HepG2 (cell line): ENCODE measurements at regions of chr7 and their contacts with region 1.

Region 1: GRCh38 chr7:98400542-98401340 is at the start of gene BAIAP2L1:
- DNase-seq: peak; percentile 80
- ATAC-seq: peak; percentile 86
- H3K4me3 ChIP-seq: peak within 1 kb of the TSS; percentile 70 to 85 (median 77)
- H3K27ac ChIP-seq: peak within 1 kb of the TSS; percentile 77
- H3K4me1 ChIP-seq: peaks cover 57% of the 10 kb centered on the region
- H3K27me3 ChIP-seq: no peaks in the 10 kb centered on the region
- CTCF ChIP-seq: no peak
- EP300 ChIP-seq: no peak
- POLR2A ChIP-seq: no peak; a peak in 1 of 4 replicates
- RAD21 ChIP-seq: peak; percentile 80; the same call in 1 of the 2 replicates
- total RNA-seq, gene BAIAP2L1: 13.0 and 13.7 TPM in 2 replicates

Region 2: DNA sequence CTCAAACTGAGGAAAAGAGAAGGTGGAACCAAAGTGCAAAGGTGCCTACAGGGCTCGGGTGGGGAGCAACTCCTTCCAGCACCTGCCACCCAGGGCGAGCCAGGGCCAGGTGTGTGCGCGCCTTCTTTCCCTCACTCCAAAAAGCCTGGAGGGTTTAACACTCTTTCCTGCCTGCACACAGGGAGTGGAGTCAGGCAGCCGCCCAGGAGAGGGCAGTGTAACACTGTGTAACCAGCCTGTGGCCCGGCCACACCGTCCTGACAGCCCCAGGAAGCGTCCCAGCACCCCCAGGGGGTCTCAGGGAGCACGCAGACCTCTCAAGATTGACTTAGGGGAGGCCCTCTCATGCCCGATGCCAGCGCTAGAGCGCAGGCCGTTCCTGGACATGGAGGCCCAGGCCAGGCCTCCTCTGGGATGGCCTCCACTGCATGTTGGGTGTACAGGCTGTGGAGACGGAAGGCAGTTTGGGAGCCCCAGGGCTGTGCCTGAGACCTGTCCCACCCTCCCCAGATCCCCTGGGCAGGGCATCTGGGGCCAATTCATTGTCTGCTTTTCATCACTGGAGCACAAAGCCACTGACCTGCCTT is 105.9 kb before region 1 on chr7:
- CTCF ChIA-PET with region 1: interaction called, 9 read pairs
- POLR2A ChIA-PET with region 1: no interaction called
- in situ Hi-C with region 1: loop called (anchors 5 kb)
- intact Hi-C with region 1: loop called (anchors 2 kb)
- DNase-seq: peak; percentile 35
- ATAC-seq: peak; percentile 89
- H3K4me3 ChIP-seq: no peak overlapping the region
- H3K27ac ChIP-seq: no peak overlapping the region
- H3K4me1 ChIP-seq: 0 out of 2 replicates have a peak, but pooled peaks cover under 1% of the 10 kb centered on the region
- H3K27me3 ChIP-seq: no peaks in the 10 kb centered on the region
- CTCF ChIP-seq: peak; percentile 88
- EP300 ChIP-seq: no peak
- POLR2A ChIP-seq: no peak
- RAD21 ChIP-seq: peak; percentile 87

Region 3: DNA sequence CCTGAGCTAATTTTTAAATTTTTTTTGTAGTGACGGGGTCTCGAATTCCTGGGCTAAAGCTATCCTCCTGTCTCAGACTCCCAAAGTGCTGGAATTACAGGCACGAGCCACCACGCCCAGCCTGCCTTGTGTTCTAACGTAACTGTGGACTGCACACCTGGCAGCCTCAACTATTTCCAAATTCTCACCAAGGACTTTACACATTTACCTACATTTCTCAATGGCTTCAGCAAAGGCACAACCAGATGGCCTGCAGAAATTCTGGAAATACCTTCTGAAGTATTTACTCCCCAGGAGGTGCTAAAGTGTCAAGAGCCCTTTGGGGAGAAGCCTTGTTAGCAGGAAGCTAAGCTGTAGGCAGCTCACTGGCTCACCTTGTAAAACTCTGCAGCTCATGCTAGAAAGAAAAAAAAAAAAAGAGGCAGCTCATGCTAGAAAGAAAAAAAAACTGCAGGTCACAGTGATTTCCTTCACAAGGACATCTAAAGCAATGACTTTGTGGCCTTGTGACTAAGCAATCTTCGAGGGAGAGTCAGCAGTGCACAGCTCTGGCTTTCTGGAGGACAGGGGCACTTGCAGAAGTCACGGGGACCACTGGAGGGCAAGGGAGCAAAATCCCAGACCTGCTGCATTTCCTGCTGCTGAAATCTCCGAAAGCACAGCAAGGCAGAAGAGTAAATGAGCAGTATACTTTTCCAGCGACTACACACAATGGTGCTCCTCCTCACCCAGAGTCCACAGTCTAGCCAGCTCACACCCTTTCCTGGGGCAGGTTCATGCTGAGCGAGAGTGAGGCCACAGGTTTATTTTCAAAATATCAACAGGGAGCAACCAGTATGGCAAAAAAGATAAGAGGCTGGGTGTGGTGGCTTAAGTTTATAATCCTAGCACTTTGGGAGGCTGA is 40.3 kb before region 1 on chr7:
- CTCF ChIA-PET with region 1: interaction called, 3 read pairs
- POLR2A ChIA-PET with region 1: interaction called, 4 read pairs
- in situ Hi-C with region 1: no loop called
- intact Hi-C with region 1: loop called (anchors 5 kb)
- DNase-seq: peak; percentile 51
- ATAC-seq: peak; percentile 92
- H3K4me3 ChIP-seq: peak overlapping the region in 1 of 3 experiments; percentile 19; a peak in 1 of 6 replicates
- H3K27ac ChIP-seq: peak overlapping the region; percentile 58
- H3K4me1 ChIP-seq: peaks cover 29% of the 10 kb centered on the region
- H3K27me3 ChIP-seq: no peaks in the 10 kb centered on the region
- CTCF ChIP-seq: peak; percentile 29; the same call in 1 of the 2 replicates
- EP300 ChIP-seq: no peak
- POLR2A ChIP-seq: no peak
- RAD21 ChIP-seq: no peak; the same call in 1 of the 2 replicates

Region 4: DNA sequence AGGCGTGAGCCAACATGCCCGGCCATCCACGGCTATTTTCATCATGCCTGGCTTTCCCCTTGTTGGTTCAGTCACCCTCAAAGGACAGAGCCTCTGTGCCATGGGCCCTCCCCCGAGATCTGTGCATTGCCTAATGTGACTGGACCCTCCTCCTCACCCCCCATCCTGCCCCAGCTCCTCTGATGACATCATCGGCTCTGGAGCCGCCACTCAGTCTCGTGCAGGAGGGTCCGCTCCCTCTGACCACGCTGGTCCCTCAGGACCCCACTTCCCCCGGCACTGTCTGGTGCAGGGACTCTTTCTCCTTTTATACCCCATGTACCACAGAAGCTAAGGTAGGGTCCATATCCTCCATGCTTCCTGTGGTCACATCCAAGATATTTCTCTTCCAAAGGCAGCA is 33.4 kb after region 1 on chr7:
- CTCF ChIA-PET with region 1: no interaction called
- POLR2A ChIA-PET with region 1: no interaction called
- in situ Hi-C with region 1: no loop called
- intact Hi-C with region 1: no loop called
- DNase-seq: no peak
- ATAC-seq: no peak
- H3K4me3 ChIP-seq: no peak overlapping the region
- H3K27ac ChIP-seq: no peak overlapping the region
- H3K4me1 ChIP-seq: no peaks in the 10 kb centered on the region
- H3K27me3 ChIP-seq: no peaks in the 10 kb centered on the region
- CTCF ChIP-seq: no peak
- EP300 ChIP-seq: no peak
- POLR2A ChIP-seq: no peak
- RAD21 ChIP-seq: no peak

Region 5: DNA sequence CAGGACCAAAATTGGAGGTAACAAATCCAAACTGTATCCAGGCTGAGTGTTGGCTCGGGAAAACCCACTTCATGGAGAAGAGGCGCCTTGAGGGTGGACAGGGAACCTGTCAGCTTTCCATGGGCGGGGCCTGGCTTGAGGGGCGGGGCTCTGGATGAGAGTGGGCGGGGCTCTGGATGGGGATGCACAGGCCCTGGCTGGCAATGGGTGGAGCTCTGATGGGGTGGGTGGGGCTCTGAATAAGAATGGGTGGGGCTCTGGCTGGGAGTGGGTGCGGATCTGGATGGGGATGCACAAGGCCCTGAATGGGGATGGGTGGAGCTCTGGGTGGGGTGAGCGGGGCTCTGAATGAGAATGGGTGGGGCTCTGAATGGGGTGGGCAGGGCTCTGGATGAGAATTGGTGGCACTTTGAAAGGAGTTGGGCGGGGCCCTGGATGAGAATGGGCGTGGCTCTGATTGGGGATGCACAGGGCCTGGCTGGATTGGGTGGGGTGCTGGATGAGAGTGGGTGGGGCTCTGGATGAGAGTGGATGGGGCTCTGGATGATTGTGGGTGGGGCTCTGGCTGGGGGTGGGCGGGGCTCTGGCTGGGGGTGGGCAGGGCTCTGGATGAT is 119.7 kb after region 1 on chr7:
- CTCF ChIA-PET with region 1: no interaction called
- POLR2A ChIA-PET with region 1: no interaction called
- in situ Hi-C with region 1: no loop called
- intact Hi-C with region 1: no loop called
- DNase-seq: no peak
- ATAC-seq: no peak
- H3K4me3 ChIP-seq: no peak overlapping the region
- H3K27ac ChIP-seq: no peak overlapping the region
- H3K4me1 ChIP-seq: no peaks in the 10 kb centered on the region
- H3K27me3 ChIP-seq: no peaks in the 10 kb centered on the region; a peak in 1 of 5 replicates
- CTCF ChIP-seq: no peak
- EP300 ChIP-seq: no peak
- POLR2A ChIP-seq: no peak
- RAD21 ChIP-seq: no peak